ENCODE measurements at regions of chr2 and their contacts with region 1.

Region 1: GRCh38 chr2:140658766-140659692 is 1471.8 kb downstream of the LRP1B start:
- DNase-seq: peak; percentile 41
- ATAC-seq: peak; percentile 61
- H3K4me3 ChIP-seq: no peak overlapping the region
- H3K27ac ChIP-seq: peak overlapping the region; percentile 12; the same call in 1 of the 2 replicates
- H3K4me1 ChIP-seq: peaks cover 31% of the 10 kb centered on the region
- H3K27me3 ChIP-seq: no peaks in the 10 kb centered on the region
- CTCF ChIP-seq: no peak

Region 2: DNA sequence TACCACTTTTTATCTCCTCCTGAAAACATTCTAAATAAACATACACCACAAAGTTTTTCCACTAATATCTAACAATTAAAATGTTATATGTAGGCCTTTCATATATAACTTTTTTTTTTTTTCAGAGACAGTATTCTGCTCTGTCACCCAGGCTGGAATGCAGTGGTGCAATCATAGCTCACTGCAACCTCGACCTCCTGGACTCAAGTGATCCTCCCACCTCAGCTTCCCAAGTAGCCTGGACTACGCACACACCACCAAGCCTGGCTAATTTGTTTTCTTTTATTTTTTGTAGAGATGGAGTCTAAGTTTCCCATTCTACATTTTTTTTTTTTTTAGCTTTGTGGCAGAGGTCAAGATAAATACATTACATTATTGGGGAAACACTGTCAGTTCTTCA is 266.2 kb before region 1 on chr2:
- CTCF ChIA-PET with region 1: no interaction called
- POLR2A ChIA-PET with region 1: no interaction called
- intact Hi-C with region 1: loop called (anchors 5 kb)
- DNase-seq: no peak
- ATAC-seq: no peak
- H3K4me3 ChIP-seq: no peak overlapping the region
- H3K27ac ChIP-seq: no peak overlapping the region
- H3K4me1 ChIP-seq: peaks cover 26% of the 10 kb centered on the region
- H3K27me3 ChIP-seq: no peaks in the 10 kb centered on the region
- CTCF ChIP-seq: no peak

Region 3: DNA sequence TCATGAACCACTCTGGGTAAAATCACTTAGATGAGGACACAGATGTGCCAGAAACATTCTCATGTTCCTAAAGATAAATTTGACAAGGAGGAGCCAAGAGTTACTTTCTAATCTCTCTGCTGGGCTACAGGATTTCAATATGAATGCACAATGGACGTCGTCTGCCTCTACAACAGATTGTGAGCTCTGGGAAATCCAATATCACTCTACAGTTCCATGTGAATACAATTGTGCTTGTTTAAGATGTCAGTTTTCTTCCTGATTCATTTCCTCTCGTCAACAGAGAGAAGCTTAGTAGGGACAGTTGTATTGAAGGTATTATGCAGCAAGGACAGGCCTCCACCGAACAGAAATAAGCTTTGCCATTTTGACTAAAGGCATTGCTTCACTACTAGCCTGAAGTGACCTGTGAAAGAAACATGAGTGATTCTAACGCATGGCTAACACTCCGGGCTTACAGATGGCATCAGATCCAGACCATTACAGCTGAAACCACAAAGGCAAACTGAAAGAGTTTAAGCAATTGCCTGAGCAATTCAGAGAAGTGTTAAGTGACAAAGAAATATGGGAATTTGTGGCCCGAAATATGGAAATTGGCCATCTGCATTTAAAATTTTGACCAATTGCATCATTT is 119.7 kb before region 1 on chr2:
- CTCF ChIA-PET with region 1: no interaction called
- POLR2A ChIA-PET with region 1: no interaction called
- intact Hi-C with region 1: no loop called
- DNase-seq: no peak
- ATAC-seq: no peak
- H3K4me3 ChIP-seq: no peak overlapping the region
- H3K27ac ChIP-seq: no peak overlapping the region
- H3K4me1 ChIP-seq: no peaks in the 10 kb centered on the region
- H3K27me3 ChIP-seq: no peaks in the 10 kb centered on the region
- CTCF ChIP-seq: no peak

Region 4: GRCh38 chr2:140916410-140916809 is 257.4 kb after region 1 on chr2:
- CTCF ChIA-PET with region 1: no interaction called
- POLR2A ChIA-PET with region 1: no interaction called
- intact Hi-C with region 1: no loop called
- DNase-seq: peak; percentile 43
- ATAC-seq: peak; percentile 20; the same call in 1 of the 2 replicates
- H3K4me3 ChIP-seq: no peak overlapping the region
- H3K27ac ChIP-seq: no peak overlapping the region
- H3K4me1 ChIP-seq: no peaks in the 10 kb centered on the region
- H3K27me3 ChIP-seq: no peaks in the 10 kb centered on the region
- CTCF ChIP-seq: no peak